Endothelial cell of umbilical vein (primary cell): ENCODE measurements at regions of chr1 and their contacts with region 1.

Region 1: GRCh38 chr1:91712981-91713841 is 172.7 kb downstream of the TGFBR3 start:
- DNase-seq: no peak
- H3K4me3 ChIP-seq: no peak overlapping the region
- H3K27ac ChIP-seq: no peak overlapping the region
- H3K4me1 ChIP-seq: no peaks in the 10 kb centered on the region
- H3K27me3 ChIP-seq: no peaks in the 10 kb centered on the region
- CTCF ChIP-seq: no peak
- POLR2A ChIP-seq: no peak

Region 2: DNA sequence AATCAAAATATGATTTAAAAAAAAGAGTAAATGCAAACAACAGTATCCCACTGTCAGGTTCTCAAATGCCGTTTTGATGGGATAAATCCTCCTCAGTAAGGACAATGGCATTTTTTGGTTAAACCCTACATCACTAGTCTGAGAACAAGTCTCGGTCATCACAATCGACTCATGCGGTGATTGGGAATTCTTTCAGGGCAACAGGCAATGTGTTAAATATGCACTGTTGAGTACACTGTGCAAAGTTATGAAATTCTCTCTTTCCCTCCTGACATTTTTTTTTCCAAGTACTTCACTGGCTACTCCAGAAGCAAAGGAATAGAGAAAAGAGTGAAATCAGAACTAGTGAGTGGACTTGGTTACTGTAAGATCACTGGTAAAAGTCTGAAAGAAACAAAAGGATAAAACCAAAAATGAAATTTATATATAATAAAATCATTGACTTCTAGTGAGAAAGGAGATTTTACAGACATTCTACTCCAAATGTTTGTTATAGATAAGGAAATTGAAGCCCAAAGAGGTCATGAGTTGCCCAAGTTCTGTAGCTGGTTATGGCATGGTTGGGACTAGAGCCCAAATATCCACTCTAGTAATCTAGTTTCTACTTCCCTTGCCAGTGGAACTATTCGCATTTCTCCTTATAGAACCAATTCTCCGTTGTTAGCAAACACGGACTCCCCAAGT is 61.5 kb after region 1 on chr1:
- CTCF ChIA-PET with region 1: no interaction called
- POLR2A ChIA-PET with region 1: no interaction called
- dilution Hi-C with region 1: no loop called
- intact Hi-C with region 1: loop called (anchors 5 kb)
- DNase-seq: no peak
- H3K4me3 ChIP-seq: no peak overlapping the region
- H3K27ac ChIP-seq: no peak overlapping the region
- H3K4me1 ChIP-seq: no peaks in the 10 kb centered on the region
- H3K27me3 ChIP-seq: no peaks in the 10 kb centered on the region
- CTCF ChIP-seq: no peak
- POLR2A ChIP-seq: no peak